Cardiac septum (tissue), 1 donor: ENCODE measurements at regions of chr19 and their contacts with region 1.

Region 1: GRCh38 chr19:18675779-18676178 is 7.7 kb upstream of the CRTC1 start:
- DNase-seq: no peak

Region 2: DNA sequence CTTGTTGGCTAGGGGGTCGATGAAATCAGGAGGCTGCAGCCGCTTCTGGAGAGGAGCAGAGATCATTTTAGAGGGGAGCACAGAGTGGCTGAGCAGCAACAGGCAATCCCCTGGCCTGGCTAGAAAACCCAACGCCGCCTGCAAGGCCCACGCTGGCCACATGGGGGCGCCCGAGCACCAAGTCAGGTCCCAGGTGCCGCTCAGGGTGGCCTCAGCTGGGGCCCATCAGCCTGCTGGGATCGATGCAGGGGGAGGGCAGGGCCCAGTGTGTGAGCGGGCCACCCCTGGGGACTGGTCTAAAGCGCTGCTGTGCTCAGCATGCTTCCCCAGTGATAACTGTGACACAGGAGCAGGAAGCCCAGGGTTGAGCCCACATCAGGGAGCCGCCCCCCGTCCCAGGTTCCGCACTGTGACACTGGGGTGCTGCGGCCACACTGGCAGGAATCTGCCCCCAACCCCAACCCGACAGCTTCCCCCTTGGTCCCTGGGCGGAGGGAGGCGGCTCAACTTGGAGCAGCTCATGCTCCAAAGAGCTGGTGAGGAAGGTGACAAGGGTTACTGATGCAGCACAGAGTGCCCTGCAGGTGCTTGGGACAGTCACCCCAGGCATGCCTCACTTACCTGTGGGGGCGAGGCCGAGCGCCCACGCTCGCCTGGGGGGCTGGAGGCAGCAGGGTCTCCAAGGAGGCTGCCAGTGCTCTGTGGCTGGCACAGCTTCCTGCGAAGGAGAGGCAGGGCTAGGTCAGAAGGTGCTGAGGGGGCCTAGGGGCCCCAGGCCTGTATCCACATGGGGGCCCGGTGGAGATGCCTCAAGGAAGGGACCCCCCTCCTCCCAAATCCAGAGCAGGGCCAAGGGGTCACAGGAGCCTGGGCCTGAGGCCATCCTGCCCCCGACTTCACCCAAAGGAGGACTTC is 224.6 kb before region 1 on chr19:
- intact Hi-C with region 1: loop called (anchors 5 kb)
- DNase-seq: peak; percentile 93

Region 3: DNA sequence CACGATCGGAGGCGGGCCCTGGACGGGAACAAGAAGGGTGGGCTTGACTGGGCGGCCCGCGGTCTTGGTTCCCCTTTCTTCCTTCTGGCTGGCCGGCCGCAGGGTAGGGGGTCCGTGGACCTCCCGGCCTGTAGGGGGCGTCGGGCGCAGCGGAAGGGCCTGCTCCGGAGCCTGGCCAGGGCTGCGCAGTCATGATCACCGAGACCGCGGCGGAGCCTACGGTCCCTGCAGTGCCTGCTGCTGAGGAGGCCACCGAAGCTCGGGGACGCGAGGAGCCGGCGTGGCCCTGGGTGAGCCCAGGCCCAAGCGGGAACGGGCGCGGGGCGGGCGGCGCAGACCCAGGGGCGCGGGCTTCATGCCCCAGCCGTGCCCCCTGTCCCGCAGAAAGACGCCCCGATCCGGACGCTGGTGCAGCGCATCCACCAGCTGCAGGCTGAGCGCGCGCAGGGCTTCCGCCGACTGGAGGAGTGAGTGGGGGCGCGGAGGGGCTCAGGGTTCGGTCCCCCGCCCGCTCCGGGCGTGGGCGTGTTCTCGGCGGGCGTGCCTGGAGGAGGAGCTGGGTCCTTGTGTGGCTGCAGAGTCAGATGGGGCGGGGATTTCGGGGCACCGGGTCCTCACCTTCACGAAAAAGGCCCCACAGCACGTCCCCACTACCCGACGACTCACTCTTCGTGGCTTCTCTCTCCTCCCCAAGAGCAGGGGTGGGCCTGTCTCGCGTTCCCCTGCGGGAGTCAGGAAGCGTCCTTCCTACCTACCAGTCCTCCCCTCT is 87.0 kb before region 1 on chr19 and contains the start of gene REX1BD:
- intact Hi-C with region 1: loop called (anchors 5 kb)
- DNase-seq: peak; percentile 93
- total RNA-seq, gene REX1BD: 58.9 TPM